ENCODE measurements at regions of chr10 and their contacts with region 1.

Region 1: DNA sequence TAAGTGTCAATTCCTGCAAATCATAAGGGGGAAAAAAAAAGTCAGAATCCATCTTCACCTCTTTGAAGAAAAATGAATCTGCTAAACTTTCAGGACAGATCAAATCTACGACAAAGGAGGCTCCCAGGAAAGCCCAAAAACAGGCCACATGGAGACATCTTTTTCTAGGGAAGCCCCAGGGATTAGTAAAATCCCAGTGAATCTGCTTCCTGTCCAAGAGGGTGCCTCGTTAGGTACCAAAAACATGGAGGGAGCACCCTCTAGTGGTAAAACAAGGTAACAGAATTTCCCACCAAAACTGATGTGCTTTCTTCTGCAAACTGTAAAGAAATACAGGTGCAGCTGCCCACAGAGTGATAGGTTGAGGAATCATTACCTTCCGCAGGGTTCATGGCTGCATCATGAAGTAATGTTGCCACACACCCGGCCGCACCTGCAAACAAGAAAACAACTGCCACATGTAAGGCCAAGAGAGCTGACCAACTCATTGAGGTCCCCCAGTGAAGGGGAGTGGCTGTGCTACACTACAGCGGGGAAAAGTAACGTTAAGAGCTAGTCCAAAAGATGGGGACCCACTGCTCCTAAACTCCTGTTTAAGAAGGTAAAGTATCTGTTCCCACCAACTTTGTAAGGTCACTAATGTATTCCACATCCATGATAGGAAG is 7.9 kb downstream of the SLC25A28 start:
- DNase-seq: peak in 9 of 35 experiments; percentile 1 to 74 (median 19)
- ATAC-seq: peak; percentile 47 to 70 (median 54)
- H3K4me3 ChIP-seq: no peak overlapping the region
- H3K4me3 Mint-ChIP-seq: no peak overlapping the region
- H3K27ac ChIP-seq: no peak overlapping the region
- H3K27ac Mint-ChIP-seq: peak overlapping the region; percentile 36 to 73
- H3K4me1 ChIP-seq: peaks cover 0 to 4% of the 10 kb centered on the region in 2 experiments
- H3K4me1 Mint-ChIP-seq: peaks cover 25 to 28% (median 27%) of the 10 kb centered on the region in 3 donors
- H3K27me3 ChIP-seq: no peaks in the 10 kb centered on the region
- H3K27me3 Mint-ChIP-seq: no peaks in the 10 kb centered on the region

Region 2: DNA sequence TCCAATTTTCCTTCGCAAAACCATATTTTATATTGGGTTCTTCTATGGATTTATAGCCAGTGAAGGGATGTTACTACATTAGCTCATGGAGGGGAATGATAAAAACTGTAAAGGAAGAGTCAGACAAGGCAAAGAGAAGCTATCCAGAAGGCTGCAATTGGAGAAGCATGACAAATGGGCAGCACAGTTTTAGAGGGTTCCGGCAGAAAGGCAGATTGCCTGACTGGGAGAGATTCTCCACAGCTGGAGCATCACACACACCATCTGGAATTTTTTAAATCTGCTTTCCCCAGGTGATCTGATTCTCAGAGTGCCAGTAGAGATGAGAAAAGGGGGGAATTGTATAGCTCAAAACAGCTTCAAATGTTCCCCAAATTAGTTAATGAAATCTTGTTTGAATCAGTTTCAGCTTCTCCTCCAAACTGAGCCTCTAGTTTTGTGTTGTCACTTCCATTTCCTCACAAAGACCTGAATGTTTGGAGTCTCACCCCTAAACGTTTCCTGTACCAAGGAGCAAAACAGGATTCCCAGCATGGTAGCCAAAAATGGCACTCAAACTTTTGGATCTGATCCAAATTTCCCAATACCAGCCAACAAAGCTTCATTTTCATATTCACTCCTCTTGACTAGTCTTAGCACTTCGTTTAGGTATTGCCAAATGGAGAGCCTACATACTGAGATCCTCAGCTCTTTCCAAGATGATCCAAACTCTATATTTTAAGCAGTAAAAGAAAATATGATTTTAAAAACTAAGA is 554.2 kb before region 1 on chr10:
- CTCF ChIA-PET with region 1: no interaction called
- POLR2A ChIA-PET with region 1: no interaction called
- DNase-seq: no peak
- ATAC-seq: no peak
- H3K4me3 ChIP-seq: no peak overlapping the region
- H3K4me3 Mint-ChIP-seq: no peak overlapping the region
- H3K27ac ChIP-seq: no peak overlapping the region
- H3K27ac Mint-ChIP-seq: no peak overlapping the region
- H3K4me1 ChIP-seq: no peaks in the 10 kb centered on the region
- H3K4me1 Mint-ChIP-seq: no peaks in the 10 kb centered on the region
- H3K27me3 ChIP-seq: no peaks in the 10 kb centered on the region
- H3K27me3 Mint-ChIP-seq: no peaks in the 10 kb centered on the region

Region 3: GRCh38 chr10:99435986-99436638 is 176.2 kb before region 1 on chr10:
- CTCF ChIA-PET with region 1: interaction called, 9 to 16 read pairs
- POLR2A ChIA-PET with region 1: no interaction called
- DNase-seq: peak in 1 of 35 experiments; percentile 61
- ATAC-seq: peak in 3 of 4 experiments; percentile 45 to 61 (median 56)
- H3K4me3 ChIP-seq: no peak overlapping the region
- H3K4me3 Mint-ChIP-seq: no peak overlapping the region
- H3K27ac ChIP-seq: no peak overlapping the region
- H3K27ac Mint-ChIP-seq: no peak overlapping the region
- H3K4me1 ChIP-seq: peaks cover 6 to 7% of the 10 kb centered on the region in 2 experiments
- H3K4me1 Mint-ChIP-seq: peaks cover 20 to 27% (median 21%) of the 10 kb centered on the region in 3 donors
- H3K27me3 ChIP-seq: no peaks in the 10 kb centered on the region
- H3K27me3 Mint-ChIP-seq: no peaks in the 10 kb centered on the region